HEK293 (cell line): ENCODE measurements at regions of chr11 and their contacts with region 1.

Region 1: DNA sequence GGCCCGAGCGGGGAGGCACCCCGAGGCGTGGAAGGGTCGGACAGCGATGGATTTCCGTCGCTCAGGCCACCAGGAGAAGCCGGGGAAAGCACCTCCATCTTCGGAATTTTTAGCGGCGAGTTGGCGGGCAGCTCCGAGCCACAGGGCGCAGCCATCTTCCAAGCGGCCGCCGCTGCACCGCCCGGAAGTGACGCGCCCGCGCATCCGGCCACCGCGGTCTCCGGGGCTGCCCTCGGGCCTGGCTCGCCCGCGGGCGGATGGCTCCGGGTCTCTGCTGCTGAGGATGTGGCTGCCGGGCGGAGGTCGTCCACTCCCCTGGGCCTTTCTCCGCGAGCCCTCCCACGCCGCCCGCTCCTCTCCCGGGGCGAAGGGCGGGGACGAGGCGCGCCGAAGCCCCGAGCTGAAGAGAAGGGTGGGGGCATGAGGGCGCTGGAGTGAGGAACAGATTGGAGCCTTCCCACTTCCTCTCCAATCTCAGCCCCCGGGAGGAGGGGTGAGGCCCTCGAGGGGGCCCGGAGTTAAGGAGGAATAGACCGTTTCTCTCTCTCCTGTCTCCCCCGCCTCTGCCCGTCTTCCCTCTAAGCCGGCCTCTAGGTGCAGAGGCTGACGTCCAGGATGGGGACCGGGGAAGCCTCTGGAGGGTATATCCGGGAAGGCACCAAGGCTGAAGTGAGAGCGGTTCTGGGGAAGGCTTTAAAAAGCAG is at the start of gene MSANTD2:
- H3K4me3 ChIP-seq: peak within 1 kb of the TSS; percentile 88
- H3K27ac ChIP-seq: peak within 1 kb of the TSS; percentile 92
- H3K4me1 ChIP-seq: no peaks in the 10 kb centered on the region
- CTCF ChIP-seq: peak; percentile 10; the same call in 1 of the 2 replicates

Region 2: GRCh38 chr11:124758317-124759203 is 41.8 kb before region 1 on chr11:
- CTCF ChIA-PET with region 1: interaction called, 13 read pairs
- POLR2A ChIA-PET with region 1: interaction called, 14 read pairs
- H3K4me3 ChIP-seq: no peak overlapping the region
- H3K27ac ChIP-seq: no peak overlapping the region
- H3K4me1 ChIP-seq: no peaks in the 10 kb centered on the region
- CTCF ChIP-seq: no peak

Region 3: DNA sequence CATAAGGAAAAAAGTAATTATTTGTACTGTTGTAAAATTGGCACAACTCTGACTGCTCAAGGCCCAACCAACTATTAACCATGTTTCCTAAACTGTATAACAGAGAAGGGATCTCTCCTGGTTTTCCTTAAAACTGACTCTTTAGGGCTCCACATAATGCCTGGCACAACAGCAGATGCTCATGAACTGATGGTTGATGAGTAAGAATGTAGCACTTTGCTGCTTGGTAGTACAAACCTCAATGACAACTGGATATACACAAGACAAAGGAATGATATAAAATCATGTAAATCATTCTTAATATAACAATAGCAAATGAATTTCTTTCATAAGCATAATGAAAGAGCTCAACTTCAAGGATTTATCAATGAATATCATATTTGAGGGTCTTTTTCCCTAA is 11.9 kb before region 1 on chr11:
- CTCF ChIA-PET with region 1: interaction called, 16 read pairs
- POLR2A ChIA-PET with region 1: no interaction called
- H3K4me3 ChIP-seq: no peak overlapping the region
- H3K27ac ChIP-seq: no peak overlapping the region
- H3K4me1 ChIP-seq: peaks cover 8% of the 10 kb centered on the region
- CTCF ChIP-seq: no peak

Region 4: GRCh38 chr11:124812876-124813275 is 12.5 kb after region 1 on chr11:
- CTCF ChIA-PET with region 1: interaction called, 9 read pairs
- POLR2A ChIA-PET with region 1: interaction called, 10 read pairs
- H3K4me3 ChIP-seq: no peak overlapping the region
- H3K27ac ChIP-seq: no peak overlapping the region
- H3K4me1 ChIP-seq: no peaks in the 10 kb centered on the region
- CTCF ChIP-seq: no peak